Activated T-helper 2 cell treated with anti-CD3 and anti-CD28 coated beads, Interferon-gamma antibody, Interleukin-2, Interleukin-4, amounts not matched to agents 10 μg/mL and 5 μg/mL and 100 μg/mL, durations not matched to agents 14 hours and 24 hours and 36 hours (primary cell): ENCODE measurements at regions of chr10 and their contacts with region 1.

Region 1: DNA sequence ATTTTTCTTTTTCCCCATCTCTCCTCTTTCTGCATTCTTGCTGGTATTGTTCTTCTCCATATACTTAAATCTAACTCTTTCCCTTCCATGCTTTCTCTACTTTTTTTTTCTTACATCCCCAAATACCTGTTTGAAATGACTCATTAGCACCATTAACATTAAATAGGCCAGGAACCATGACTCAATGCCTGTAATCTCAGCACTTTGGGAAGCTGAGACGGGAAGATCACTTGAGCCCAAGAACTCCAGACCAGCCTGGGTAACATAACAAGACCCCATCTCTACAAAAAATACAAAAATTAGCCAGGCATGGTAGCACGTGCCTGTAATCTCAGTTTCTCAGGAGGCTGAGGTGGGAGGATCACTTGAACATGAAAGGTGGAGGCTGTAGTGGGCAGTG is 1026.8 kb downstream of the GATA3 start:
- DNase-seq: no peak
- H3K4me3 Mint-ChIP-seq: peak overlapping the region; percentile 6
- H3K27ac Mint-ChIP-seq: peak overlapping the region; percentile 10
- H3K4me1 Mint-ChIP-seq: peaks cover 44% of the 10 kb centered on the region
- H3K27me3 Mint-ChIP-seq: no peaks in the 10 kb centered on the region

Region 2: GRCh38 chr10:8990280-8990987 is 90.8 kb before region 1 on chr10:
- intact Hi-C with region 1: loop called (anchors 2 kb)
- DNase-seq: no peak
- H3K4me3 Mint-ChIP-seq: no peak overlapping the region
- H3K27ac Mint-ChIP-seq: peak overlapping the region; percentile 73
- H3K4me1 Mint-ChIP-seq: peaks cover 58% of the 10 kb centered on the region
- H3K27me3 Mint-ChIP-seq: no peaks in the 10 kb centered on the region

Region 3: DNA sequence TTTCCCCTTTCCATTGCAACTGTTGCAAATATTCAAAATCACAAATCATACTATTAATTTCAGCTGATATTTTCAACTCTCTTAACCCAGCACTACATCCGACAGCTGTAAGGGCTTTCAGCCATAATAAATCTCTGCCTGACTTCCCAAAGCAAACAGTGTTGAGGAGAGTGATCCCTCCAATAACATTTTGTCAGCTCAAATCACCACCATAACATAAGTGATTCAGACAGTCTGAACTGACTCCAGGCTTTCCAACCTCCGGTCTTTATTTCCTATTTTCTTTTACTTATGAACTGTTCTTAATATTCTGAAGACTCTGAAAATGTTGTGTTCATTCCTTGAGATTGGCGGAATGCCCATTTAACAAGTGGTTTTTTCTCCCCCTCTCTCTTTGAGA is 59.1 kb after region 1 on chr10:
- intact Hi-C with region 1: no loop called
- DNase-seq: no peak
- H3K4me3 Mint-ChIP-seq: no peak overlapping the region
- H3K27ac Mint-ChIP-seq: no peak overlapping the region
- H3K4me1 Mint-ChIP-seq: peaks cover 8% of the 10 kb centered on the region
- H3K27me3 Mint-ChIP-seq: no peaks in the 10 kb centered on the region

Region 4: DNA sequence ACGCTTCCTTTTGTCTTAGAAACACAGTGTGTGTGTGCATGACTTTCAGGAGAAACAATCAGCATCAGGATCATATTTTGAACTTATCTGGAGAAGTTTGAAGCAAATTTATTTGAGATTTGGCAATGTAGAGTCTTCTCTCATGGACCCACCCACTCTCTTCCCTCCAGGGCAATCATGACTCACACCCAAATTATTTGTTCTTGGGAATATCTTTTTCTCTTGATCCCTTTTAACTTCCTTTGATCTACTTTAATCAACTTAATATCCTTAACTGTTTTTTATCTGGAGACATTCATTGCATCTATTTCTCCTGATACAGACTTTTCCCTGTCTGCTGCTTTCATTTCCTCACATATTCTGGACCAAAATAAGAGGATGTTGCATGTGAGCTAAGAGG is 147.5 kb after region 1 on chr10:
- intact Hi-C with region 1: loop called (anchors 5 kb)
- DNase-seq: no peak
- H3K4me3 Mint-ChIP-seq: no peak overlapping the region
- H3K27ac Mint-ChIP-seq: no peak overlapping the region
- H3K4me1 Mint-ChIP-seq: peaks cover 41% of the 10 kb centered on the region
- H3K27me3 Mint-ChIP-seq: peaks cover 7% of the 10 kb centered on the region